MCF 10A (cell line): ENCODE measurements at regions of chr19 and their contacts with region 1.

Region 1: DNA sequence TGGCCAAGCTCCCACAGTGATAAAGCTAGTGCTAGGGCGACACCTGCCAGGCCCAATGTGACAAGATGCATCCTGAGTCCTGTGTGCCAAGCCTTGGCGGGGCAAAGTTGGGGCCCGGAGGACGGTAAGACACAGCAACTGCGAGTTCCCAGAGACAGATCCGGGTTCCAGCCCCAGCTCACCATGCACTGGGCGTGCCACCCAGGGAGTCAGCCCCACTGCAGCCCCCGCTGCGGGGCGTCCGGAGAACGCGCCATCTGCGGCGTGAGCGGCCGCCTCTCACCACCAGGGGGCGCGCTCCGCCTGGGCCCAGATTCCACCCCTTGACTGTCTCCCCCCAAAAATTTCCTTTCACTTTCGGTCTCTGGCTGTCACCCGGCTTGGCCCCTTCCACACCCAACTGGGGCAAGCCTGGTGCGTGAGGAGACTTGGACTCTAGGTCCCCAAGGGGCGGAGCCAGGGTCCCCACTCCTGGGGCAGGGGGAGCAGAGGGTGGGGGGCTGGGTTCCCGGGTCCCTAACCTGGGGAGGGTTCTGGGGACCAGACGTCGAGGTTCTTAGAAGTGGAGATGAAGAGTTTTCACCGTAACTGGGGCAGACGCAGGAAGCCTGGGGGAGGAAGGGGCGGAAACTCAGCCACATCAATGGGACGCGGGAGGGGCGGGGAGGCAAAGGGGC is at the start of gene FLT3LG:
- DNase-seq: peak; percentile 78
- H3K4me3 Mint-ChIP-seq: peak within 1 kb of the TSS; percentile 77
- H3K27ac Mint-ChIP-seq: peak within 1 kb of the TSS; percentile 59
- H3K4me1 Mint-ChIP-seq: peaks cover 3% of the 10 kb centered on the region
- H3K27me3 Mint-ChIP-seq: peaks cover 13% of the 10 kb centered on the region
- CTCF ChIP-seq: peak; percentile 95
- total RNA-seq, gene FLT3LG: 1.5 and 3.6 TPM in 2 replicates

Region 2: GRCh38 chr19:49487277-49488045 is 13.5 kb after region 1 on chr19 and contains the start of gene RPL13A:
- CTCF ChIA-PET with region 1: interaction called, 22 read pairs
- POLR2A ChIA-PET with region 1: interaction called, 3 read pairs
- intact Hi-C with region 1: no loop called
- DNase-seq: peak; percentile 100
- H3K4me3 Mint-ChIP-seq: peak within 1 kb of the TSS; percentile 95
- H3K27ac Mint-ChIP-seq: peak within 1 kb of the TSS; percentile 99
- H3K4me1 Mint-ChIP-seq: no peaks in the 10 kb centered on the region
- H3K27me3 Mint-ChIP-seq: no peaks in the 10 kb centered on the region
- CTCF ChIP-seq: no peak
- total RNA-seq, gene RPL13A: 3,716 and 3,819 TPM in 2 replicates